ENCODE measurements at regions of chrX and their contacts with region 1.

Region 1: DNA sequence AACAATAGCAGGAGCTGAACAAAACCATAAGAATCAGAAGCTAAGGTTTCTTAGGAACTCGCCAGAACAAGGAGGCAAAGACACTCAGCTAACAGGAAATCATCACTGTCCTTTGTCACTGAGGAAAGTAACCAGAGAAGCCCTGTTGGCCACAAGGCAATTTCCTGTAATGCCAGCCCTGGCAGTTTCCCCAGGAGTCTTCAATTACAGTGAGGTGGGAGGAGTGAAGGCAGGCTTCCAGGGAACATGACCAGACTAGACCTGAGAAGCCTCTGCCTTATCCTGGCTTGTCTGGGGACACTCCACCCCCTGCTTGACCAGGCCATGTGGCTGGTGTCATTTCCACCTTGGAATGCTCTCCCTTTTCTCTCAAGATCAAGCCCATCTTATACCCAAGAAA is 125.3 kb downstream of the COL4A6 start:
- DNase-seq: peak; percentile 83
- H3K4me3 ChIP-seq: no peak overlapping the region
- H3K27ac ChIP-seq: peak overlapping the region; percentile 67
- H3K4me1 ChIP-seq: peaks cover 38% of the 10 kb centered on the region
- H3K27me3 ChIP-seq: no peaks in the 10 kb centered on the region
- CTCF ChIP-seq: no peak

Region 2: DNA sequence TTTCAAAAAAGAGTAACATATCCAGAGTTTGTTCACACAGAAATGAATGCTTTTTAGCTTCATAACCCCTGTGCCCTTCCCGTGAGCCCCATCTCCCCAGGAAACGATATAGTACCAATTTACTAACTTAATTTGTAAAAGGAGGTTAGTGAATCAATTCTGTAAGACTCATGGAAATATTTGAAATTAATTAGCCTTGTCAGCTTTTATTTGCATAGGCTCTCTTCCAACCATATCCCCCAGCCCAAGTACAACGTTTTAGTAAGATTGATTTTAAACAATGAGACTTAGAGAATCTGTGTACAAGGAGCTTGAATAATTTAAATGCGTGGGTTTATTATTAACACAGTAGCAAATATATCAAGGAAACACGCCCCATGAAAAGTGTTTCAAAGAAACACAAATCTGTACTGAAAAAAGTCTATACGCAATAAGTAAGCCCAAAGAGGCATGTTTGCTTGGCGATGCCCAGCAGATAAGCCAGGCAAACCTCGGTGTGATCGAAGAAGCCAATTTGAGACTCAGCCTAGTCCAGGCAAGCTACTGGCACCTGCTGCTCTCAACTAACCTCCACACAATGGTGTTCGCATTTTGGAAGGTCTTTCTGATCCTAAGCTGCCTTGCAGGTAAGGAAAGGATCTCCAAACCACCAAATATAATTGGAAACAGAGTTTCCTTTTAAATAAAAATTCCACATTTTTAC is 268.2 kb before region 1 on chrX and contains the start of gene VSIG1:
- CTCF ChIA-PET with region 1: no interaction called
- dilution Hi-C with region 1: no loop called
- in situ Hi-C with region 1: no loop called
- intact Hi-C with region 1: no loop called
- DNase-seq: no peak
- H3K4me3 ChIP-seq: no peak within 1 kb of the TSS
- H3K27ac ChIP-seq: no peak within 1 kb of the TSS
- H3K4me1 ChIP-seq: no peaks in the 10 kb centered on the region
- H3K27me3 ChIP-seq: no peaks in the 10 kb centered on the region
- CTCF ChIP-seq: no peak
- total RNA-seq, gene VSIG1: 0.83 to 3.5 TPM

Region 3: GRCh38 chrX:108353452-108353851 is 40.5 kb after region 1 on chrX:
- CTCF ChIA-PET with region 1: no interaction called
- dilution Hi-C with region 1: loop called (anchors 5 kb)
- in situ Hi-C with region 1: no loop called
- intact Hi-C with region 1: no loop called
- DNase-seq: no peak
- H3K4me3 ChIP-seq: no peak overlapping the region
- H3K27ac ChIP-seq: no peak overlapping the region
- H3K4me1 ChIP-seq: no peaks in the 10 kb centered on the region
- H3K27me3 ChIP-seq: no peaks in the 10 kb centered on the region
- CTCF ChIP-seq: no peak

Region 4: DNA sequence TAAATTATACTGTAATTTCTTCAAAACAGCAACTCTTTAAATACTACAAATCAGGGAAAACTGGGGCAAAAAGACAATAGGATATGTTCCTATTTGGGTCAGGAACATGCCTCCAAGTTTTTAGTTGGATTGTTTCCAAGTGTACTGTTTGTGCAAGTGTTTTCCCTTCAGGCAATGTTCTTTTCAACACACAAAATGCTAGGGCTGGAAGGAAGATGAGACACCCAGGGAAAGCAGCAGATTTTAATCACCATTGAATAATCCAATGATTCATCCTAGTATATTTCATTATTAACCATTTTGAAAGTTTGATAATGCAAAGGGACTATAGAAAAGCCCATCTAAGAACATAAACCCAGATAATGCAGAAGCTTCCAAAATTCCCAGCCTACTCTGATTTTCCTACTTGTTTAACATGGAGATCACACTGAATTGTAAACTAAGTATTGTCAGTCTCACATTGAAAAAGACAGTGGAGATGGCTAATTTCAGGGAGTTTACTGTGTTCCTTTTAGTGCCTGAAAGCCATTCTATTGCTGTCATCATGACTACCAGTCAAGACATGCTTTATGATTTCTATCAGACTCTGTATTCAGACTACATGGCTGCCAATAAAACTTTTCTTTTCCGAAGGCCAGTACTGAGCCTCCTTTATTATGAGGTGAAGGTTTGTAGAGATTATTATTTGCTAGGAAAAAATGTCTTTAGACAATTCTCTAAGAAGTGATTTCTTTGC is 86.7 kb after region 1 on chrX:
- CTCF ChIA-PET with region 1: no interaction called
- dilution Hi-C with region 1: no loop called
- in situ Hi-C with region 1: loop called in 1 of 2 experiments (anchors 5 kb)
- intact Hi-C with region 1: loop called (anchors 1 kb)
- DNase-seq: peak; percentile 86
- H3K4me3 ChIP-seq: peak overlapping the region in 2 of 3 experiments; percentile 13 to 39
- H3K27ac ChIP-seq: peak overlapping the region; percentile 99
- H3K4me1 ChIP-seq: peaks cover 60% of the 10 kb centered on the region
- H3K27me3 ChIP-seq: no peaks in the 10 kb centered on the region
- CTCF ChIP-seq: no peak

Region 5: GRCh38 chrX:108468486-108468885 is 155.5 kb after region 1 on chrX:
- CTCF ChIA-PET with region 1: no interaction called
- dilution Hi-C with region 1: no loop called
- in situ Hi-C with region 1: no loop called
- intact Hi-C with region 1: no loop called
- DNase-seq: no peak
- H3K4me3 ChIP-seq: no peak overlapping the region
- H3K27ac ChIP-seq: no peak overlapping the region
- H3K4me1 ChIP-seq: no peaks in the 10 kb centered on the region
- H3K27me3 ChIP-seq: peaks cover under 1% of the 10 kb centered on the region
- CTCF ChIP-seq: no peak

Region 6: GRCh38 chrX:108537005-108537404 is 224.1 kb after region 1 on chrX:
- CTCF ChIA-PET with region 1: no interaction called
- dilution Hi-C with region 1: no loop called
- in situ Hi-C with region 1: no loop called
- intact Hi-C with region 1: loop called (anchors 5 kb)
- DNase-seq: peak; percentile 29
- H3K4me3 ChIP-seq: no peak overlapping the region
- H3K27ac ChIP-seq: no peak overlapping the region
- H3K4me1 ChIP-seq: no peaks in the 10 kb centered on the region
- H3K27me3 ChIP-seq: no peaks in the 10 kb centered on the region
- CTCF ChIP-seq: peak; percentile 75 to 77